ENCODE measurements at regions of chr6 and their contacts with region 1.

Region 1: GRCh38 chr6:139369568-139370282 is 4.7 kb downstream of the CITED2 start:
- DNase-seq: peak; percentile 69
- H3K4me3 ChIP-seq: no peak overlapping the region
- H3K27ac ChIP-seq: no peak overlapping the region
- H3K4me1 ChIP-seq: peaks cover 22% of the 10 kb centered on the region
- CTCF ChIP-seq: peak; percentile 94

Region 2: GRCh38 chr6:138588805-138589434 is 780.8 kb before region 1 on chr6:
- CTCF ChIA-PET with region 1: no interaction called
- POLR2A ChIA-PET with region 1: no interaction called
- intact Hi-C with region 1: loop called (anchors 5 kb)
- DNase-seq: peak; percentile 68
- H3K4me3 ChIP-seq: no peak overlapping the region
- H3K27ac ChIP-seq: no peak overlapping the region
- H3K4me1 ChIP-seq: peaks cover 16% of the 10 kb centered on the region
- CTCF ChIP-seq: peak; percentile 97

Region 3: GRCh38 chr6:139060332-139060731 is 309.4 kb before region 1 on chr6:
- CTCF ChIA-PET with region 1: no interaction called
- POLR2A ChIA-PET with region 1: no interaction called
- intact Hi-C with region 1: no loop called
- DNase-seq: no peak
- H3K4me3 ChIP-seq: no peak overlapping the region
- H3K27ac ChIP-seq: no peak overlapping the region
- H3K4me1 ChIP-seq: no peaks in the 10 kb centered on the region
- CTCF ChIP-seq: no peak

Region 4: DNA sequence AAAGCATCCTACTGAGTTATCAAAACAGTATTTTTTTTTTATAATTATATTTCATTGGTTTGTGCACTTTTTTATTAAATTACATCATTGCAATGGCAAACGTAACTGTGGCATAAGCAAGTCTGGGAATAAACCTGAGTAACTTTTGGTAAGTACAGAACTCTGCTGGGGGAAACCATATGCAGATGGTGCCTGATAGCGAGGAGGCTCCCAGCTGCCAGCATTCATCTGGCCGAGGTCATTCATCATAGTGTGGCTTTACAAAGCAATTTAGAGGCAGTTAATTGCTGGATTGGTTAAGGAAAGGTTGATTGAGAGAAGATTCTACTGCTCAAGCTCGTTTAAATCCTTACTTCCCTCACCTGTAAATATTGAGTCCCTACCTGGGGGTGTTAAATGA is 182.2 kb before region 1 on chr6:
- CTCF ChIA-PET with region 1: no interaction called
- POLR2A ChIA-PET with region 1: no interaction called
- intact Hi-C with region 1: no loop called
- DNase-seq: no peak
- H3K4me3 ChIP-seq: no peak overlapping the region
- H3K27ac ChIP-seq: no peak overlapping the region
- H3K4me1 ChIP-seq: no peaks in the 10 kb centered on the region
- CTCF ChIP-seq: no peak

Region 5: GRCh38 chr6:139230391-139230840 is 139.3 kb before region 1 on chr6:
- CTCF ChIA-PET with region 1: interaction called, 7 read pairs
- POLR2A ChIA-PET with region 1: interaction called, 4 read pairs
- intact Hi-C with region 1: loop called (anchors 1 kb)
- DNase-seq: peak; percentile 77
- H3K4me3 ChIP-seq: no peak overlapping the region
- H3K27ac ChIP-seq: peak overlapping the region; percentile 47
- H3K4me1 ChIP-seq: peaks cover 26% of the 10 kb centered on the region
- CTCF ChIP-seq: peak; percentile 74

Region 6: GRCh38 chr6:139448051-139448649 is 78.4 kb after region 1 on chr6:
- CTCF ChIA-PET with region 1: no interaction called
- POLR2A ChIA-PET with region 1: no interaction called
- intact Hi-C with region 1: no loop called
- DNase-seq: no peak
- H3K4me3 ChIP-seq: no peak overlapping the region
- H3K27ac ChIP-seq: no peak overlapping the region
- H3K4me1 ChIP-seq: no peaks in the 10 kb centered on the region
- CTCF ChIP-seq: no peak

Region 7: DNA sequence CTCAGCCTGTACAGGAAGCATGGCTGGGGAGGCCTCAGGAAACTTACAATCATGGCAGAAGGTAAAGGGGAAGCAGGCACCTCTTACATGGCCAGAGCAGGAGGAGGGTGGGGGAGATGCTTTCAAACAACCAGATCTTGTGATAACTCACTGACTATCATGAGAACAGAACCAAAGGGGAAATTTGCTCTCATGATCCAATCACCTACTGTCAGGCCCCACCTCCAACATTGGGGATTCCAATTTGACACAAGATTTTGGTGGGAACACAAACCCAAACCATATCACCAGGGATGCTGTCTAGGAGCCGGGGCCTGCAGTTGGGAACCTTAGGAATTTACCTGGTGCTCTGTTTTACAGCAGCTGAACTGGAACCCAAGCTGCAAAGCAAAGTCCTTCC is 195.9 kb after region 1 on chr6:
- CTCF ChIA-PET with region 1: no interaction called
- POLR2A ChIA-PET with region 1: no interaction called
- intact Hi-C with region 1: no loop called
- DNase-seq: no peak
- H3K4me3 ChIP-seq: no peak overlapping the region
- H3K27ac ChIP-seq: no peak overlapping the region
- H3K4me1 ChIP-seq: no peaks in the 10 kb centered on the region
- CTCF ChIP-seq: no peak